HCT116 (cell line): ENCODE measurements at regions of chr9 and their contacts with region 1.

Region 1: GRCh38 chr9:109349421-109349846 is 28.6 kb upstream of the EPB41L4B start:
- DNase-seq: no peak
- ATAC-seq: no peak
- H3K4me3 ChIP-seq: no peak overlapping the region
- H3K27ac ChIP-seq: no peak overlapping the region
- H3K4me1 ChIP-seq: peaks cover 8 to 28% of the 10 kb centered on the region in 2 experiments; a peak in 3 of 4 replicates
- H3K27me3 ChIP-seq: no peaks in the 10 kb centered on the region
- CTCF ChIP-seq: no peak
- POLR2A ChIP-seq: no peak
- RAD21 ChIP-seq: no peak

Region 2: DNA sequence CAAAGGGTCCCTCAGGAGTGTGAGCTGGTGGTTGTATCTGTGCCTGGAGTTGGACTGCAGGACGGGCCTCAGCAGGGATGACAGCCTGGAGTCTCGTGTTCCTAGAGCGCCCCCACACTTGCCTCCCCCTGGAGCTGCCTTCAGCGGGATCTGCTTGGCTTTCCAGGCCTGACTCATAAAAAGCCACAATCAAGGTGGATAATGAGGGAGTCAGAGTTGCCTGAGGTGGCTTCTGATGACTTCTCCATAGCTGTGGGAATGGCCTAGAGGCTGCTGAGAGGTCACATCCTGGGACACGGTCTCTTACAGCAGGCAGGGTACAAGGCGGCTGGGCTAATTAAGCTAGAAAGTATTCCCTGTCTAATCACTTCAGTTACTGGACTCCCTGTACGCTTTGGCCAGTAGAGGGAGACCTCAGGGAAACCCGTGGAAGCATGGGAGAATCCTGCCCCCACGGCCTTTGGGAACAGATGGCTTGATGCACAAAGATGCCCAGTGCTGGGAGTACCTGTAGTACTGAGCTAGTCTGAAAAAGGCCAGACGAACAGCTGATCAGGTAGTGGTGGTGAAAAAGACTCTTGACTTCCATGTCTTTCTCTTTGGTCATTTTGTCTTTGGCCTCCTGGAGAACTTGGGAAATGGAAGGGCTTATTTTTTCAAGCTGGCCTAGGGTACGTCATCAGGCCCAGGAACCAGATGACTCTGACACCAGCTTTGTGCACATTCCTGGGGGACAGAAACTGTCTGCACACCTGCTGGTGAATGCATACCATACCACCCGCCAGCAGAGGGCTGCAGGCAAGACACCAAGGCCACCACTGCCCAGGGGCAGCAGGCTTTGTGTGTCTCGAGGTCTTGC is 166.3 kb before region 1 on chr9:
- CTCF ChIA-PET with region 1: interaction called, 18 read pairs
- POLR2A ChIA-PET with region 1: no interaction called
- RAD21 ChIA-PET with region 1: no interaction called
- intact Hi-C with region 1: no loop called
- DNase-seq: peak; percentile 47
- ATAC-seq: peak; percentile 93
- H3K4me3 ChIP-seq: no peak overlapping the region
- H3K27ac ChIP-seq: no peak overlapping the region
- H3K4me1 ChIP-seq: peaks cover 0 to 10% of the 10 kb centered on the region in 2 experiments; a peak in 1 of 4 replicates
- H3K27me3 ChIP-seq: no peaks in the 10 kb centered on the region
- CTCF ChIP-seq: peak; percentile 55 to 71 (median 66)
- POLR2A ChIP-seq: no peak
- RAD21 ChIP-seq: peak; percentile 43

Region 3: DNA sequence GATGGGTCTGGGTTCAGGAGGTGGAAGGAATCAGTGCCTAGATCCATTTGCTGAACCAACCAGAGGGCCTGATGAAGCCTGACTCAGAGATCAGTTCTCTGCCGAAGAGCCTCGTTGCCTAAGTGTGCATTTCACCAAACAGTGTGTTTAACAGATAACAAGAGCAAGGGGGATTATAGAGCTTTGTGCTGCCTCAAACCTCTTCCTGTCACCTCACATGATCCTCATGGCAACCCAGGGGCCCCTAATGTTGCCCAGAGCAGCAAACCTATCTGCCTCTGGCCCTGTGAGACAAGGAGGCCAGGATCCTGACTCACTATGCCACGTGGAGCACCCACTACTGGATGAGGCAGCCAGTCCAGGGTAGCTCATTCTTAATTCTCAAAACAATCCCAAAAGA is 37.8 kb after region 1 on chr9:
- CTCF ChIA-PET with region 1: no interaction called
- POLR2A ChIA-PET with region 1: no interaction called
- RAD21 ChIA-PET with region 1: no interaction called
- intact Hi-C with region 1: no loop called
- DNase-seq: no peak
- ATAC-seq: no peak
- H3K4me3 ChIP-seq: no peak overlapping the region
- H3K27ac ChIP-seq: no peak overlapping the region
- H3K4me1 ChIP-seq: no peaks in the 10 kb centered on the region
- H3K27me3 ChIP-seq: no peaks in the 10 kb centered on the region
- CTCF ChIP-seq: no peak
- POLR2A ChIP-seq: no peak
- RAD21 ChIP-seq: no peak